Calu3 (cell line): ENCODE measurements at regions of chr14 and their contacts with region 1.

Region 1: GRCh38 chr14:77124345-77125280 is 17.0 kb downstream of the ZDHHC22 start:
- DNase-seq: peak; percentile 54
- H3K4me3 Mint-ChIP-seq: peak overlapping the region; percentile 52
- H3K27ac Mint-ChIP-seq: no peak overlapping the region
- H3K4me1 Mint-ChIP-seq: peaks cover 18% of the 10 kb centered on the region
- H3K27me3 Mint-ChIP-seq: peaks cover 48% of the 10 kb centered on the region
- CTCF ChIP-seq: peak; percentile 53

Region 2: DNA sequence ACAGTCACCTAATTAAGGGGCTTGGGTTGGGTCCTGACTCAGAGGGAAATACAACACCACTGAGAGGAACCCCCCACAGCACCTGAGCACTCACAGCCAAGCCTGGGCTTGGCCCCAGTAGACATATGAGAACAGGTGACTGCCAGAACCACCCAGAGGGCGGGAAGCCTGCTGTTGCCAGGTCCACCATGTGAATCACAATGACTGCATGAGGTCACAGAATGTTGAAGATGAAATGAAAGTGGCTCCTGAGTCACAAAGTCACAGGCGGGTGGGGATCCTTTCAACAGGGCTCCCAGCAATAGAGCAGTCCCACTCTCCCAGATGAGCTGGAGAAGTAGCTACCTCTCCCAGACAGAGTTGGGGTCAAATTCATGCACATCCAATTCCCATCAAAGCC is 298.5 kb before region 1 on chr14 and contains the start of gene LRRC74A:
- CTCF ChIA-PET with region 1: interaction called, 11 read pairs
- intact Hi-C with region 1: no loop called
- DNase-seq: no peak
- H3K4me3 Mint-ChIP-seq: no peak within 1 kb of the TSS
- H3K27ac Mint-ChIP-seq: no peak within 1 kb of the TSS
- H3K4me1 Mint-ChIP-seq: peaks cover 8% of the 10 kb centered on the region
- H3K27me3 Mint-ChIP-seq: peaks cover 48% of the 10 kb centered on the region
- CTCF ChIP-seq: no peak
- total RNA-seq, gene LRRC74A: not detected in 2 replicates